ENCODE measurements at regions of chr5 and their contacts with region 1.

Region 1: DNA sequence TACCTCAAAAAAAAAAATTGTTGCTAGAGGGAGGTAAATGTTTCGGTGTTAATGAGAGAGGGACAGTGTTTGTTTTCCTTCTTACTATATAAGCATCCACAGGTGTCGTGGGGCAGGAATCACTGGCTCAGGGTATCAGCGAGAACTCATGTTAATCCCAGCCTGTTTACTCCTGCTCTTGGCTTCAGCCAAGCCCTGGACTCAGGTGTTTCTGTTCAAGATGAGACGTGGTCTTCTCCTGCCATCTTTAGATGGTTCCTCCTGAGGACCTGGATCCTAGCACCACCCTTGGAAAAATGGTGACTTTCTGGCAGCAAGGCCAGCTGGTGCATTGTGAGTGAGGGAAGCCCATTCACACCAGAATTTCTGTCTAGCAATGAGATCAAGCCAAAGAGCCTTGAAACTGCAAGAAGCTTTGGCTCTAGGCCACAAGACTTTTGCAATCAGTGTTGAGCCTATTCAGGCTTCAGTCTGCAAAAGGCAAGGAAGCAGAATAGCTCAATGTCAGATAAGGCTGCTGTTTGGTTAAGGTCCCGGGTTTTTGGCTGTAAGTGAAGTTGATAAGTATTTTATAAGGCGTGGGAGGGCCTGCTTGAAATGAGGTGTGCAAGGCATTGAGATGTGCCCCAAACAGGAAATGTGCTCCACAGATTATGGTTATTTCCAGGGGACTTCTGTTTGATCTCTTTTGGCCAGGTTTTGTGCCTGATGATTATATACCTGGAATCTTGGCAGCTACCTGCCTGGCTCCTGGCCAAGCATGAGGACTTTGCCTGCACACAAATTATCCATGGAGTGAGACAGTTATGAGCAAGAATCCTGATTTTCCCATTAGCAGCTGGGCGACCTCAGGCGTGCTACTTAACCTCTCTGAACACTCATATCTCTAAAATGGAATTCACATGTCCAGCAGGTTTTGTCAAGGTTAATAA is 99.8 kb downstream of the TENT4A start:
- DNase-seq: no peak
- H3K4me3 ChIP-seq: no peak overlapping the region
- H3K27ac ChIP-seq: no peak overlapping the region
- H3K27me3 ChIP-seq: no peaks in the 10 kb centered on the region
- CTCF ChIP-seq: no peak

Region 2: GRCh38 chr5:7856855-7857254 is 1043.8 kb after region 1 on chr5:
- intact Hi-C with region 1: loop called in 1 of 2 experiments (anchors 10 kb)
- DNase-seq: peak in 8 of 10 donors; percentile 19 to 71 (median 51)
- H3K4me3 ChIP-seq: no peak overlapping the region
- H3K27ac ChIP-seq: peak overlapping the region in 2 of 59 donors; percentile 18 to 21
- H3K27me3 ChIP-seq: no peaks in the 10 kb centered on the region
- CTCF ChIP-seq: peak; percentile 42 to 92 (median 83)

Measured in dorsolateral prefrontal cortex (tissue), 120 donors.